Panc1 (cell line): ENCODE measurements at regions of chr20 and their contacts with region 1.

Region 1: DNA sequence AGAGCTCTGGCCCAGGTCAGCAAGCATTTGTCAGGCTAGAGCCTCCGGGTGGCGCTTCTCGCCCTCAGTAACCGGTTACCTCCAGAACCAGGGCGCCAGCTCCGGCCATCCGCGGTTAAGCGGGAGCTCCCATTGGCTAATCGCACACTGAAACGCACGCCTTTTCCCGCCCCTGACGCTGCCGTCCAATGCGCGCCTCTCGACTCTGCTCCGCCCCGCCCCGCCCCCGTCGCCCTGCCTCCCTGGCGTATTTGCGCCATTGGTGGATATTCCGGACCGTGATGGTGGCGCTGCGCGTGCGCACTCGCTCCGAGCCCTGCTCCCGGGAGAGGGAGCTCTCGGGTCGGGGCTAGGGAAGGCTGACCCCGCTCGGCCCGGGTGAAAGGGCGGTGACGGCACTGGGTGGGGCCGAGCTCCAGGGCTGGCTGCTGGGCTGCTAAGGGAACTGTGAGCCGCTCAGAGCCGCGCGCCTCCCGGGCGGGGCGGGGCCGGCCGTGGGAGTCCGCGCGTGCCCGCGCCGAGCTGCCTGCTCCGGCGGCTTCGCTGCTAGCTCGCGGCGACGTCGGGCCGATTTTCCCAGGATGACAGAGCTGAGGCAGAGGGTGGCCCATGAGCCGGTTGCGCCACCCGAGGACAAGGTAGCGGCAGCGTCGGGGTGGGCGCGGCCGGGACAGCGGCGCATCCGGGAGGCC is at the start of gene CDS2:
- DNase-seq: peak; percentile 97
- ATAC-seq: peak; percentile 97
- H3K4me3 ChIP-seq: peak within 1 kb of the TSS; percentile 86 to 98
- H3K27ac ChIP-seq: peak within 1 kb of the TSS; percentile 95
- H3K4me1 ChIP-seq: peaks cover 10% of the 10 kb centered on the region
- H3K27me3 ChIP-seq: no peaks in the 10 kb centered on the region
- CTCF ChIP-seq: peak; percentile 94
- total RNA-seq, gene CDS2: 54.0 TPM

Region 2: GRCh38 chr20:5191829-5192569 is 65.3 kb after region 1 on chr20:
- CTCF ChIA-PET with region 1: interaction called, 74 read pairs
- POLR2A ChIA-PET with region 1: no interaction called
- in situ Hi-C with region 1: no loop called
- intact Hi-C with region 1: loop called (anchors 1 kb)
- DNase-seq: peak; percentile 57
- ATAC-seq: peak; percentile 91
- H3K4me3 ChIP-seq: no peak overlapping the region
- H3K27ac ChIP-seq: no peak overlapping the region
- H3K4me1 ChIP-seq: no peaks in the 10 kb centered on the region
- H3K27me3 ChIP-seq: no peaks in the 10 kb centered on the region
- CTCF ChIP-seq: peak; percentile 81